ENCODE measurements at regions of chr7 and their contacts with region 1.

Region 1: DNA sequence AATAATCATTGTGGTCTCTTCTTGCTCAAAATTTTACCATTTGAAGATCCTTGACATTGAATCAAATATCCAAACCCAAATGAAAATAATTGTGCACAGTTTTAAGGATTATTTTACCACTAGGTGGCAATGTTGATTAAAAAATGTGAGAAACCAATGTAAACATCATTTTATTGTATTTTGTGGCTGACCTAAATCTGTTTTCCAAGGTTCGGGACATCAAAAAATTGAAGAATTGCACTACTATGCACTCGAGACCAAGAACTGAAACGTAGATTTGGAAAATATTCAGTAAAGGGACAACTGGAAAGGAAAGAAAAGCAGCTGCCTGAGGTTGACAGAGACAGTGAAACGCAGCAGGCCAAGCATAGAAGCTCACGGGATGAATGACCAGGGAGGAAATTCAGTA is 259.3 kb downstream of the SNX13 start:
- DNase-seq: peak; percentile 49
- ATAC-seq: no peak
- H3K4me3 ChIP-seq: no peak overlapping the region
- H3K27ac ChIP-seq: peak overlapping the region; percentile 55; the same call in 1 of the 2 replicates
- H3K4me1 ChIP-seq: peaks cover 15% of the 10 kb centered on the region
- H3K27me3 ChIP-seq: no peaks in the 10 kb centered on the region
- CTCF ChIP-seq: peak; percentile 66
- POLR2A ChIP-seq: no peak
- RAD21 ChIP-seq: peak; percentile 67

Region 2: GRCh38 chr7:18337048-18337809 is 656.3 kb after region 1 on chr7:
- CTCF ChIA-PET with region 1: no interaction called
- POLR2A ChIA-PET with region 1: no interaction called
- dilution Hi-C with region 1: no loop called
- in situ Hi-C with region 1: loop called (anchors 10 kb)
- intact Hi-C with region 1: no loop called
- DNase-seq: no peak
- ATAC-seq: no peak
- H3K4me3 ChIP-seq: no peak overlapping the region
- H3K27ac ChIP-seq: no peak overlapping the region
- H3K4me1 ChIP-seq: no peaks in the 10 kb centered on the region
- H3K27me3 ChIP-seq: peaks cover 1% of the 10 kb centered on the region; the same call in 1 of the 2 replicates
- CTCF ChIP-seq: no peak
- POLR2A ChIP-seq: no peak
- RAD21 ChIP-seq: no peak

Region 3: DNA sequence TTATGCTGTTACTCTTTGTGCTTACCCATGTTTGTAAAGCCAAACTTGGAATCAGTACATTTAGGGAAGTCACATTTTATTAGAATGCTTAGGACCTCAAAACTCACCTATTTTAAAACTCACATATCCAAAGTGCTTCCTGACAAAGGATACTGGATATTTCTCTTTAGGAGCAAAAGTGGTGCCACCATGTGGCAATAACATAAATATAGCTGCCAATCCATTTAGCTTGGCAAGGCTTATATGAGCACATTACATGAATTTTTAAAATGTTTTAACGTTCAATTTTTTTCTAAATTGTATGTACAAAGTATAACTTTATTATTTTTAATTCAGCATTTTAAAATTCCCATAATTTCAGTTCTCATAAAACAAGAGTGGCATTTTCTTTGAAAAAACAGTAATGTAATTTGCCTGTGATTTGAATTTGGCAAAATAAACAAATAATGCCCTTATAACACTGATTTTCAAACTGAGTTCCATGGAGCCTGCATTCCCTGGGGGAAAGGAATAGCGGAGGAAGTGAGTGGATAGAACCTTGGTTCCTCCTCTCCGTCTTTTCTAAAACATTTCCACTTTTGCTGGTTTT is 890.0 kb after region 1 on chr7:
- CTCF ChIA-PET with region 1: no interaction called
- POLR2A ChIA-PET with region 1: no interaction called
- dilution Hi-C with region 1: no loop called
- in situ Hi-C with region 1: loop called (anchors 25 kb)
- intact Hi-C with region 1: loop called (anchors 10 kb)
- DNase-seq: peak; percentile 42
- ATAC-seq: no peak
- H3K4me3 ChIP-seq: no peak overlapping the region
- H3K27ac ChIP-seq: no peak overlapping the region
- H3K4me1 ChIP-seq: no peaks in the 10 kb centered on the region
- H3K27me3 ChIP-seq: no peaks in the 10 kb centered on the region
- CTCF ChIP-seq: peak; percentile 54
- POLR2A ChIP-seq: no peak
- RAD21 ChIP-seq: peak; percentile 68